Stomach (tissue), 19 donors: ENCODE measurements at regions of chr19 and their contacts with region 1.

Region 1: DNA sequence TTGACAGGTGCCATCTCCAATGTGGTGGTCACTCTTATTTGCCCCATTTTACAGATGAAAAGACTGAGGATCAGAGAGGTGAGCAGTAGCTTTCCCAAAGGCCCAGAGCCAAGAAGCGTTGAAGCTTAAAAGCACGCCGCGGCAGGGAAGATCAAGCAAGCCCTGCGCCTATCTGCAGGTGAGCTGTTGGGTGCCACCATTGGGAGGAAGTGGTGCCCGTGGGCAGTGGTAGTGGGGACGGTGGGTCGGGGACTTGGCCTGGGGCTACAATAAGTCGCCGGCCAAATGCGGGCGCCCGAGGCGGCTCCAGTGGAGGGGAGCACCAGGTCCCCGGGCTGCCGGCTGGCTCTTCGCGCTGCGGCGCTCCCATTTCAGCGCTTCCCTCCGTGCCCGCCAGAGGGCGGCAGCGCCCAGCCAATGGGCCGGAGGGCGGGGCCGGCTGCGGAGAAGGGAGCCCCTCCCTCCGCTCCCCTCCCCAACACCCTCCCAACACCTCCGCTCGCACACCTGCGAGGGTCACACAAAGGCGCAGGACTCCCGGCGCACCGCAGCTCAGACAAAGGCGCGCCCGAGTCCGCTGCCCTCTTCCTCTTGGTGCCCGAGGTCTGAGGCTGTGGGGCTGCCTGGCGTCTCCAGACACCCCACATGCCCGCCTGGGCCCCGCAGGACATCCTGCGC is 744 bp upstream of the POU2F2 start:
- DNase-seq: peak; percentile 78 to 88
- H3K4me3 ChIP-seq: peak overlapping the region; percentile 30 to 43 (median 35)
- H3K27ac ChIP-seq: peak overlapping the region in 3 of 5 donors; percentile 21 to 48 (median 31)
- H3K4me1 ChIP-seq: peaks cover 16 to 20% (median 17%) of the 10 kb centered on the region in 4 donors
- H3K27me3 ChIP-seq: peaks cover 5 to 87% (median 13%) of the 10 kb centered on the region in 3 donors
- CTCF ChIP-seq: peak in 5 of 7 experiments; percentile 85 to 96 (median 95)
- EP300 ChIP-seq: no peak
- POLR2A ChIP-seq: no peak

Region 2: DNA sequence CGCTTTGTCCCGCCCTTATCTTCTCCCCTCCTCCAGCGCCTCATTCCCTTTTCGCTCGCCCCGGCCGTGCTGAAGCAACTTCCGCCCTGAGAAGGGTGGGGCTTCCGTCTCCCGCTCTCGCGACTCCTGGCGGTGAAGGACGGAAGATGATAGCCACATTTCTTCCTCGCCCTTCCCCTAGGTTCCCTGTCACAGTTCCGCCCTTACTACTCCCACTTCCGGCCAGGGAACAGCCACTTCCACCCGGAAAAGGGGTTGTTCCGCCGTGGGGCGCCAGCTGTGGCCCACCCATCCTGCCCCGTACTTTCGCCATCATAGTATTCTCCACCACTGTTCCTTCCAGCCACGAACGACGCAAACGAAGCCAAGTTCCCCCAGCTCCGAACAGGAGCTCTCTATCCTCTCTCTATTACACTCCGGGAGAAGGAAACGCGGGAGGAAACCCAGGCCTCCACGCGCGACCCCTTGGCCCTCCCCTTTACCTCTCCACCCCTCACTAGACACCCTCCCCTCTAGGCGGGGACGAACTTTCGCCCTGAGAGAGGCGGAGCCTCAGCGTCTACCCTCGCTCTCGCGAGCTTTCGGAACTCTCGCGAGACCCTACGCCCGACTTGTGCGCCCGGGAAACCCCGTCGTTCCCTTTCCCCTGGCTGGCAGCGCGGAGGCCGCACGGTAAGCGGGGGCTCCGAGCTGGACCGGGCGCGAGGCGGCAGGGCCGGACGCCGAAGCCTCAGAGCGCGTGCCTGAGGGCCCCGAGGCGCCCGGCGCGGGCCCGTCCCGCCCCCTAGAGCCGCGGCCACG is 273.2 kb before region 1 on chr19 and contains the start of gene RPS19:
- intact Hi-C with region 1: no loop called
- DNase-seq: peak; percentile 99
- H3K4me3 ChIP-seq: peak within 1 kb of the TSS; percentile 78 to 96 (median 83)
- H3K27ac ChIP-seq: peak within 1 kb of the TSS; percentile 94 to 97 (median 96)
- H3K4me1 ChIP-seq: peaks cover 26 to 53% (median 49%) of the 10 kb centered on the region in 4 donors
- H3K27me3 ChIP-seq: no peaks in the 10 kb centered on the region
- CTCF ChIP-seq: peak in 6 of 7 experiments; percentile 44 to 93 (median 70)
- EP300 ChIP-seq: peak; percentile 48
- POLR2A ChIP-seq: no peak
- total RNA-seq, gene RPS19: 394 to 1,489 (median 1,008) TPM

Region 3: GRCh38 chr19:42184401-42184861 is 51.4 kb after region 1 on chr19:
- intact Hi-C with region 1: loop called (anchors 5 kb)
- DNase-seq: peak; percentile 75 to 89
- H3K4me3 ChIP-seq: no peak overlapping the region
- H3K27ac ChIP-seq: no peak overlapping the region
- H3K4me1 ChIP-seq: peaks cover 0 to 20% (median 6%) of the 10 kb centered on the region in 4 donors
- H3K27me3 ChIP-seq: peaks cover under 1 to 37% (median 16%) of the 10 kb centered on the region in 3 donors
- CTCF ChIP-seq: peak in 5 of 7 experiments; percentile 78 to 88 (median 81)
- EP300 ChIP-seq: no peak
- POLR2A ChIP-seq: no peak